Ascending aorta (tissue), 2 donors: ENCODE measurements at regions of chr10 and their contacts with region 1.

Region 1: DNA sequence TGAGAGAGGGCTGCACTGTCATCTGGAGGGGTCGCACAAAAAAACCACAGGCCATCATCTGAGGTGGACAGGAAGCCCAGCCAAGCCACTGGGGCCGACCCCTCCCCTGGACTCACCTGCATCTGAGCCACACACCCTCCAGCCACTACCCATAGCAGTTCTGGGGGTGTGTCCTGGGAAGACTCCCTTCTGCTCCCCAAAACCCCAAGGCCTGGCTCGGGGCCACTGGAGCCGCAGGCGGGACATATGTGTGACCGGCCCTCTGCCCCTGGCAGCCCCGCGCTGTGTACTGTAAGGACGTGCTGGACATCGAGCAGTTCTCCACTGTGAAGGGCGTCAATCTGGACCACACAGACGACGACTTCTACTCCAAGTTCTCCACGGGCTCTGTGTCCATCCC is 90.1 kb downstream of the RGS10 start:
- DNase-seq: no peak
- H3K4me3 ChIP-seq: no peak overlapping the region
- H3K27ac ChIP-seq: no peak overlapping the region
- H3K4me1 ChIP-seq: peaks cover 11 to 19% of the 10 kb centered on the region in 2 donors
- H3K27me3 ChIP-seq: no peaks in the 10 kb centered on the region
- CTCF ChIP-seq: no peak

Region 2: DNA sequence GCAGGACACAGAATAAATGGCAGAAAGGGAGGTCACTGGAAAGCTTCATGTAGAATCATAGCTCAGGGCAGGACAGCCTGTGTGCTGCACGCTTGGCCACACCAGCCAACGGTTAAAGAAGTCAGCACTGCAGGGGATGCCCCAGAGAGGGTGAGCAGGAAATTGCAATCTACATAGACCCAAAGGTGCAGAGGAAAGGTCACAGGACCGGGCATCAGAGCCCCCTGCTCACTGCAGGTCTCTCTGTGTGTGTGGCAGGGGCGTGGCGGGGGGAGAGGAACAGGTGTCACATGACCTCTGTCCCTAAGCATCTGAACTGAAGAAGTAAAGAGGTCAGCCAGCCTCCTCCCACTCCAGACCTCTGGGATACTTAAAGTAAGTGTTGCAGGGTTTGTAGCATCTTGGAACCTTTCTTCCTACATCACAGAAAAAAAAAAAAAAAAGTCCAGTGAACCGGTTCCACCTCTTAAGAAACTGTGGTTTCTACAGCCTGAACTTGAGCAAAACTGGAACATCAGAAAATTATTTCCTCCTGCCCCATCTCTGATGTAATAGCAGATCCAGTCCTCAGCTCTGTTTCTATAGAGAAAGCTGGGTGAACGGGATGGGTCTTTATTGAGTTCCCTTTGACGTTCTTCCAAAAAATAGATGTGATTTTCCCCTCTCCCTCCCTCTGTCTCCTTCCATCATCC is 25.9 kb after region 1 on chr10:
- intact Hi-C with region 1: loop called (anchors 2 kb)
- DNase-seq: no peak
- H3K4me3 ChIP-seq: no peak overlapping the region
- H3K27ac ChIP-seq: no peak overlapping the region
- H3K4me1 ChIP-seq: peaks cover 0 to 3% of the 10 kb centered on the region in 2 donors
- H3K27me3 ChIP-seq: no peaks in the 10 kb centered on the region
- CTCF ChIP-seq: no peak

Region 3: DNA sequence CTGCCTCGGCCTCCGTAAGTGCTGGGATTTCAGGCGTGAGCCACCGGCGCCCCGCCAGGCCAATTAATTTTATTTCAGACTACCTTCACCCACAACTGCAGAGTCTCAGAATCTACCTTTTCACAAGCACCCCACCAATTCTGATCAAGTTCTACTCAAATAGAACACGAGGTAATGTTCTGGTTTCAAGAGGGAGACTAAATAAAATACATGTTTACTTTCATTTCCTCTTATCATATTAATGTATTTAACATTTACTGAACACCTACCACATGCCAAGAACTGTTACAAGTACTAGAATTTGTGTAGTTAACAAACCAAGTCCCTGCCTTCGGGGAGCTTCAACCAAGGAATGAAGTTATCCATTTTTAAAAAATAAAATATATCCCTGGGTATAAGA is 115.6 kb after region 1 on chr10:
- intact Hi-C with region 1: no loop called
- DNase-seq: no peak
- H3K4me3 ChIP-seq: no peak overlapping the region
- H3K27ac ChIP-seq: no peak overlapping the region
- H3K4me1 ChIP-seq: no peaks in the 10 kb centered on the region
- H3K27me3 ChIP-seq: no peaks in the 10 kb centered on the region
- CTCF ChIP-seq: no peak